ENCODE measurements at regions of chr19 and their contacts with region 1.

Region 1: GRCh38 chr19:4457654-4458395 is at the start of gene UBXN6:
- DNase-seq: peak; percentile 99
- H3K4me3 ChIP-seq: peak within 1 kb of the TSS; percentile 50 to 60 (median 54)
- H3K27ac ChIP-seq: peak within 1 kb of the TSS; percentile 81 to 98 (median 87)
- H3K4me1 ChIP-seq: peaks cover 27 to 32% of the 10 kb centered on the region in 2 donors
- H3K27me3 ChIP-seq: no peaks in the 10 kb centered on the region
- CTCF ChIP-seq: peak in 2 of 6 experiments; percentile 21 to 26
- POLR2A ChIP-seq: peak in 1 of 2 donors; percentile 48
- total RNA-seq, gene UBXN6: 90.1 to 187 (median 106) TPM

Region 2: DNA sequence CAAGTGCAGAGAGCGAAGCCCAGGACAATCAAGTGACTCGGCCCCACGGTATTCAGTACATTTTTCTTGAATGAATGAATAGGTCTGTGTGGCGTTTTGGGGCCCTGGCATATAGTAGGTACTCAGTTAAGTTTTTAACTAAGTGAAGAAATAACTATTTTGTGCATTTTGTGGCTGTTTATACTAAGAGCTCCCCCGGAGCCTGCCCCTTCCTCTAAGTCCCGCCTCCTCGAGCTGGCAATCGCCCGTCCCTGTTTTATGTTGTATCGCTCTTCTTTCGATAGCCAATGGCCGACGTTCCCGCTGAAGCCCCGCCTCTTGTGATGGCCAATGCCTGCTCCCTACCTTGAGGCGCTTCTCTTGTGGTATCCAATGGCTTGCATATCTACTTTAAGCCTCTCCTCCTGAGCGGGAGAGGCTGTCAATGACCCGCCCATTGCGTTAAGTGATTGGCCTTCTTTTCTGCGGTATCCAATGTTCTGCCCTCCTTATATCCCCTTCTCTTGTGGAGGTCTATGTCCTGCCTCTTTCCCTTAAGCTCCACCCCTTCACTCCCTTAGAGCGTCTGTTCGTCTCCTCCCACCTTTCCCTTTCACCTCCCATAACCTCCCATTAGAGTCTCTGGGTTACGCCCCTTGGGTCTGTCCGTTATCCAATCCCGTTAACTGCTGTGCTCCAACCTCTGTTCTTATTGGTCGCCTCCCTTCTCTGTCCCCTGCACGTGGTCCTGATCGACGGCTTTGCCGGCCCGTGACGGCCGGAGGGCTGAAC is 13.8 kb after region 1 on chr19:
- intact Hi-C with region 1: loop called (anchors 2 kb)
- DNase-seq: peak; percentile 99
- H3K4me3 ChIP-seq: peak overlapping the region in 2 of 3 donors; percentile 27 to 97
- H3K27ac ChIP-seq: peak overlapping the region; percentile 53 to 63 (median 60)
- H3K4me1 ChIP-seq: peaks cover 20% of the 10 kb centered on the region in 2 donors
- H3K27me3 ChIP-seq: no peaks in the 10 kb centered on the region
- CTCF ChIP-seq: no peak
- POLR2A ChIP-seq: peak in 1 of 2 donors; percentile 62

Region 3: GRCh38 chr19:4539693-4540581 is 82.1 kb after region 1 on chr19 and contains the start of gene LRG1:
- intact Hi-C with region 1: no loop called
- DNase-seq: peak; percentile 9 to 16
- H3K4me3 ChIP-seq: no peak within 1 kb of the TSS
- H3K27ac ChIP-seq: no peak within 1 kb of the TSS
- H3K4me1 ChIP-seq: peaks cover 8 to 9% of the 10 kb centered on the region in 2 donors
- H3K27me3 ChIP-seq: no peaks in the 10 kb centered on the region
- CTCF ChIP-seq: no peak
- POLR2A ChIP-seq: no peak
- total RNA-seq, gene LRG1: 0.56 to 2.7 (median 2.0) TPM in 3 of 4 donors, not detected in the other

Measured in thyroid gland (tissue), 4 donors.